Right cardiac atrium (tissue), 5 donors: ENCODE measurements at regions of chr3 and their contacts with region 1.

Region 1: GRCh38 chr3:185983495-185984141 is 45.8 kb upstream of the TRA2B start:
- DNase-seq: peak; percentile 54 to 74 (median 73)
- ATAC-seq: peak; percentile 86 to 94
- H3K4me3 ChIP-seq: no peak overlapping the region
- H3K27ac ChIP-seq: no peak overlapping the region
- H3K4me1 ChIP-seq: no peaks in the 10 kb centered on the region
- H3K27me3 ChIP-seq: no peaks in the 10 kb centered on the region

Region 2: GRCh38 chr3:186083746-186084145 is 100.1 kb after region 1 on chr3:
- intact Hi-C with region 1: no loop called
- DNase-seq: no peak
- ATAC-seq: no peak
- H3K4me3 ChIP-seq: no peak overlapping the region
- H3K27ac ChIP-seq: no peak overlapping the region
- H3K4me1 ChIP-seq: no peaks in the 10 kb centered on the region
- H3K27me3 ChIP-seq: no peaks in the 10 kb centered on the region

Region 3: GRCh38 chr3:186241910-186242821 is 258.5 kb after region 1 on chr3:
- intact Hi-C with region 1: loop called in 2 of 4 experiments (anchors 5 to 10 kb)
- DNase-seq: peak; percentile 72 to 85 (median 85)
- ATAC-seq: peak; percentile 95 to 98
- H3K4me3 ChIP-seq: peak overlapping the region; percentile 6
- H3K27ac ChIP-seq: peak overlapping the region; percentile 23
- H3K4me1 ChIP-seq: peaks cover 2% of the 10 kb centered on the region
- H3K27me3 ChIP-seq: no peaks in the 10 kb centered on the region

Region 4: DNA sequence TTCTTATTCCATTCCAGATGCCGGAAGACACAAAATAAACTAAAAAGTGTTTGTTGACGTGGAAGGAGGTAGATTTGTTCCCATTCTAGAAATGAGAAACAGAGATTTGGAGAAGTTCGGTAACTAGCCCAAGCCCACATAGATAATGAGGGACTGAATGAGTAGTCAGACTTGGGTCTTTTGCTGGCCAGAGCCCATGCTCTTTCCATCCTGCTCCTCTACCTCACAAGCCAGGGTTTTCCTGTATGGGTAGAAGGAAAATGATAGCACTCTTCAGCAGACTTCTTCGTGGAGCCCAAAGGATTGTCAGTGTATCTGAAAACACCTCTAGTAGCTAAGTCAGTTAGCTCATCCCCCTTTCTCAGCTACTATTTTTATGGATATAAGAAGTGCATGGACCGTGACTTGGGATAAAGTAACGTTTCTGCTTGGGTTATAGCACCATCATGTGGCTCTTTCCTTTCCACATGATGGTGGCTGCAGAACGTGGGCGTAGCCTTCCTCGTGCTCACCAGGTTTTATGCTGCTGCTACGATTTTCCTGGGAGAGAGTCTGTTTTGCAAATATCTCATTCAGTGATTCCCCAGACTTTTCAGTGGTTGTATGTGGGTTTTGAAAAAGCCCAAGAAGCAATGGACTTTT is 293.8 kb after region 1 on chr3:
- intact Hi-C with region 1: loop called in 2 of 4 experiments (anchors 5 to 10 kb)
- DNase-seq: no peak
- ATAC-seq: peak; percentile 77 to 81
- H3K4me3 ChIP-seq: no peak overlapping the region
- H3K27ac ChIP-seq: no peak overlapping the region
- H3K4me1 ChIP-seq: no peaks in the 10 kb centered on the region
- H3K27me3 ChIP-seq: no peaks in the 10 kb centered on the region

Region 5: DNA sequence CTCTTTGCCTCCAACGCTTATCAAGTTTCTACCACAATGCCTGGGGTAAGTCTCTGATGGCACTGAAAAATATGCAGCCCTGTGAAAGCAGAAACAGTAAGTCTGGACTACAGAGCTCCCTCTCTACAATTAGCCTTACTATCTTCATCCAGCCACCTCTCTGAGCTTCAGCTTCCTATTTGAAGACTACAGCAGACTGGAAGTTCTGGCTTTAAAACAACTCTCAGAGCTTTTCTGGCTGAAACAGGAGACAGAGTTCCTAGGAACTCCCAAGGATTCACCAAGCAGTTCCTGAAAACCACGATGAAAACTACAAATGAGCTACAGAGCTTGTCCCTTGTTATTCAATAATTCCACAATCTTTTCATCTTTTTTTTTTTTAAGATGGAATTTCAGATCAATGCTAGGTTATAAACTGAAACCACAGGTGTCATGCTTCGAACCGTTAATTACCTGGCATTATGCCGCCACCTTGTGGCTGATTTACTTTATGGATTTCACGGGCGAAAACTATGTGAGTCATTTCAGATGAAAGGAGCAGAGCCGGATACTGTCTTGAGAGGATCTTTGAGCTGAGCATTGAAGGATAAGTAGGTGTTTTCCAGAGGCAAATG is 556.7 kb after region 1 on chr3:
- intact Hi-C with region 1: loop called in 3 of 4 experiments (anchors 5 kb)
- DNase-seq: peak in 2 of 3 donors; percentile 37 to 66
- ATAC-seq: peak; percentile 73 to 79
- H3K4me3 ChIP-seq: peak overlapping the region; percentile 25
- H3K27ac ChIP-seq: no peak overlapping the region
- H3K4me1 ChIP-seq: peaks cover 2% of the 10 kb centered on the region
- H3K27me3 ChIP-seq: no peaks in the 10 kb centered on the region